Common myeloid progenitor, CD34-positive (primary cell): ENCODE measurements at regions of chr2 and their contacts with region 1.

Region 1: DNA sequence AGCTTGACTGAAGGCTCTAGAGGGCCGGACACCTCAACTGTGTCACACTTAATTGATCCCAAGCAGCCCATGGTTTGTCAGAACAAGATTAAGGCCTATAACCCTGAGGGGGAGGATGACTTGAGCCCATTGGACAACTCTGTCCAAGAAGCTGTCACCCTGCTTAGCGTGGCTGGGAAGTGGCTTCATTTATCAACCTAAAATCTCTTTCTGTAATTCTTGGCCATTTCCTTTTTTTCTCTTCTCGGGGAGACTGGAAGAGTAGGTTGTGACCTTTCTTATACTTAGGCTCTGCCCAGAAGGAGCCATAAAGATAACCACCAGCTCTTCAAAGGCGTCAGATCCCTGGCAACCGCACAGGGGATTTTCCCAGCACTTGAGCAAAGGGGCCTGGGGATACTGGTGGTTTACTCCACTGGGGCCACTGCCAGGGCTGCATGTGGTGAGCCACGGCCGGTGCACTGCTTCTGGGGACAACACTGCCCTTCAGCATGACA is 265.5 kb downstream of the CYRIA start:
- DNase-seq: peak; percentile 85 to 97 (median 96)
- H3K4me3 ChIP-seq: no peak overlapping the region
- H3K27ac ChIP-seq: no peak overlapping the region
- H3K4me1 ChIP-seq: peaks cover 3 to 26% (median 14%) of the 10 kb centered on the region in 4 experiments
- H3K27me3 ChIP-seq: no peaks in the 10 kb centered on the region

Region 2: GRCh38 chr2:16387461-16387984 is 12.7 kb before region 1 on chr2:
- CTCF ChIA-PET with region 1: interaction called, 12 read pairs
- POLR2A ChIA-PET with region 1: no interaction called
- DNase-seq: peak in 1 of 3 donors; percentile 24
- H3K4me3 ChIP-seq: no peak overlapping the region
- H3K27ac ChIP-seq: no peak overlapping the region
- H3K4me1 ChIP-seq: peaks cover 0 to 7% (median 1%) of the 10 kb centered on the region in 4 experiments
- H3K27me3 ChIP-seq: no peaks in the 10 kb centered on the region

Region 3: GRCh38 chr2:16487686-16488085 is 87.5 kb after region 1 on chr2:
- CTCF ChIA-PET with region 1: interaction called, 14 read pairs
- POLR2A ChIA-PET with region 1: interaction called, 3 read pairs
- DNase-seq: peak; percentile 81 to 87 (median 85)
- H3K4me3 ChIP-seq: no peak overlapping the region
- H3K27ac ChIP-seq: peak overlapping the region in 1 of 2 experiments; percentile 17
- H3K4me1 ChIP-seq: peaks cover 17 to 59% (median 44%) of the 10 kb centered on the region in 4 experiments
- H3K27me3 ChIP-seq: no peaks in the 10 kb centered on the region